Esophagus muscularis mucosa (tissue), 4 donors: ENCODE measurements at regions of chr6 and their contacts with region 1.

Region 1: DNA sequence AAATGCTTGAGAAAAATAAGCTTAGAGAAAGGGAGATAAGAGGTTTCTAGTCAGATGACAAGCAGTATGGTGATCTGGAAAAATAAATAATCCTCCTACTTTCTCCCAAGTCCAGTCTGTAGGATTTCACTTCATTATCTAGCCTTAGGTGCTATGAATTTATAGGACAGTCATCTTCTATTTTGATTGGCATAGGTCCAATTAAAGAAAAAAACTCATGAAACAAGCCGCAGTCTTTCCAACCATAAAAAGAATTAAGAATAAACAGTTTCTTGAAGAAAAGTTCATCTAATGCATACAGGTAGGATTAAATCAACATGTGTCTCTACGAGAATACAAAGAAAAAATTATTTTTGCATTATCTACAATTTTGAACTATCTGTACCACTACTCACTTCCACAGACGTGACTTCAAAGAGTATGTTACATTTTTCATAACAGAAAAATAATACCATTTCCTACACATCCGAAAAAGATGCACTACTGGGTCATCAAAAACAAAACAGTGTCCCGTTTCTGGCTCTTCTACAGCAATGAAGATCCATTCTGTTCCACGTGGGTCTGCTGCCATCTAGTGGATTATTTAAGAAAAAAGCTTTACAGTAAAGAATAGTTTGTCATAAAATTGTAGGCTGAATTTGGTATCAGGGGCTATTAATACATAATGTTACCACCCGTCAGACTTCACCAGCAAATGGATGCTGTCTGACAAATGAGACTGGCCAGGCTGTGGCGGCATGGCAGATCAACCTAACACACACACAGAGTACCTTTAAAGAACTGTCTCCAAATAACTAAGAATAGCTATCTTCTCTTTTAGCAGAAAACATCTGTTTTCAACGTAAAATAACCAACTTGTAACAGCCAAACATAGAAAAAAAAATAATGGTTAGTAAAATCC is 28.9 kb downstream of the STX7 start:
- DNase-seq: no peak
- H3K4me3 ChIP-seq: no peak overlapping the region
- H3K27ac ChIP-seq: no peak overlapping the region
- H3K4me1 ChIP-seq: peaks cover 7 to 55% (median 40%) of the 10 kb centered on the region in 4 donors
- H3K27me3 ChIP-seq: no peaks in the 10 kb centered on the region
- CTCF ChIP-seq: peak; percentile 73 to 80 (median 76)
- EP300 ChIP-seq: no peak
- POLR2A ChIP-seq: no peak

Region 2: DNA sequence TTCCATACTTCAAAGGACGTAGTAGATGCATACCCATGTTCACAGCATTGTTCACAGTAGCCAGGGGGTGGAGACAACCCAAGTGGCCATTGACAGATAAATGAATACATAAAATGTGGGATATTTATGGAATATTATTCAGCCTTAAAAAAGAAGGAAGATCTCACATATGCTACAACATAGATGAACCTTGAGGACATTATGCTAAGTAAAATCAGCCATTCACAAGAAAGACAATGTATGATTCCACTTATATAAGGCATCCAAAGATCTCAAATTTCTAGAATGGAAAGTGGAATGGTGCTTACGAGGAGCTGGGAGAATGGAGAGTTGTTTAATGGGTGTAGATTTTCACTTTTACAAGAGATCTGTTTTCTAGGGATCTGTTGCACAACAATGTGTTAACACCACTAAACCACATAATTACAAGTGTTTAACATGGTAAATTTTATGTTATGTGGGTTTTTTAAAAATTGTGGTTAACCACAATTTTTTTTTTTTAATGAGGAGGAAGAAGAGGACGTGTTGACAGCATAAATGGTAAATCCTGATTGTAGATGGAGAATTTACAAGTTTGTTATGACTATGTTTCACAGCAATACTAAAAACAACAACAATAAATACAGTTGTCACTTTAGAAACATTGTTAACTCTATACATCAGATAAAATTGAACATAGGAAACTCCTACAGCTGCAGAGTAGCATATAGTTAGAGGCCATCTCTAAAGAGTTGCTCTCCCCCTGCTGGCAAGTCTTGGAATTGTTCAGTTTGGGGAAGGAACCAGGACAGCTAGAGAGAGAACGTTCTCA is 574.4 kb before region 1 on chr6:
- intact Hi-C with region 1: loop called (anchors 10 kb)
- DNase-seq: no peak
- H3K4me3 ChIP-seq: no peak overlapping the region
- H3K27ac ChIP-seq: no peak overlapping the region
- H3K4me1 ChIP-seq: no peaks in the 10 kb centered on the region
- H3K27me3 ChIP-seq: peaks cover 0 to 2% (median 0%) of the 10 kb centered on the region in 4 donors
- CTCF ChIP-seq: peak; percentile 82 to 94 (median 87)
- EP300 ChIP-seq: no peak
- POLR2A ChIP-seq: no peak

Region 3: GRCh38 chr6:132279592-132280139 is 204.4 kb before region 1 on chr6:
- intact Hi-C with region 1: loop called (anchors 2 kb)
- DNase-seq: no peak
- H3K4me3 ChIP-seq: peak overlapping the region; percentile 41 to 55 (median 44)
- H3K27ac ChIP-seq: peak overlapping the region in 1 of 4 donors; percentile 34
- H3K4me1 ChIP-seq: no peaks in the 10 kb centered on the region
- H3K27me3 ChIP-seq: peaks cover 0 to 16% (median 0%) of the 10 kb centered on the region in 4 donors
- CTCF ChIP-seq: peak; percentile 81 to 87 (median 86)
- EP300 ChIP-seq: no peak
- POLR2A ChIP-seq: no peak

Region 4: DNA sequence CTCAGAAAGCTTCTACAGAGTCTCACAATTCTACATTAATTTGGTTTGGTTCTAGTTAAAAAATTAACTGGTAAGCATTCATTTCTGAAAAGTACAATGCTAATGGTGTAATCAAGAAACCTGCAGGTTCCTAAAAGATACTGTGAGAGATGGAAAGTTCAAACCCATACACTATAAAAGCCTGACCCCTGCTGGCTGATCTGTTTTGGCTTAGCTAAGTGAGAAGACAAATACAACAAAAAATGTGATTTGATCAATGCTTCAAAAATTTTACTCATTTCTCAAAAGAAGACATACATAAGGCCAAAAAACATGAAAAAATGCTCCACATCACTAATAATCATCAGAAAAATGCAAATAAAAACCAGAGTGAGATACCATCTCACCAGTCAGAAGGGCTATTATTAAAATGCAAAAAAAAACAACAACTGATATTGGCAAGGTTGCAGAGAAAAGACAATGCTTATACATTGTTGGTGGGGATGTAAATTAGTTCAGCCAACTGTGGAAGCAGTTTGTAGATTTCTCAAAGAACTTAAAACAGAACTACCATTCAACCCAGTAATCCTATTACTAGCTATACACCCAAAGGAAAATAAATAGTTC is 185.6 kb before region 1 on chr6:
- intact Hi-C with region 1: loop called (anchors 5 kb)
- DNase-seq: no peak
- H3K4me3 ChIP-seq: no peak overlapping the region
- H3K27ac ChIP-seq: no peak overlapping the region
- H3K4me1 ChIP-seq: no peaks in the 10 kb centered on the region
- H3K27me3 ChIP-seq: no peaks in the 10 kb centered on the region
- CTCF ChIP-seq: peak; percentile 36 to 57 (median 49)
- EP300 ChIP-seq: no peak
- POLR2A ChIP-seq: no peak

Region 5: DNA sequence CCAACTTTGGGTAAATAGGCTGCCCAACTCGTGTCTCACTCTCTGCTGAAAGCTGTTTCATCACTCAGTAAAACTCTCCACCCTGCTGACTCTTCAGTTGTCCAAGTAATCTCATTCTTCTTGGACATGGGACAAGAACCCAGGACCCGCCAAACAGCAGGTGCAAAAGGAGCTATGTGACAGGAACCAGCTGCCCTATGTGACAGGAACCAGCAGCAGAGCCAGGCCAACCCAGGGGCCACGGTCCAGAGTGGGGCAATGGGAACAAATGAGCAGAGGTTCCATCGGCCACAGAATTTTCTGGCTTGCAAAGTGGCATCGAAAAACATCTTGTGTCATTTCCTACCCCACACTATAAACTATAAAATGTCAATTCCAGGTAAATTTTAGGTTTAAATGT is 139.2 kb before region 1 on chr6:
- intact Hi-C with region 1: no loop called
- DNase-seq: no peak
- H3K4me3 ChIP-seq: no peak overlapping the region
- H3K27ac ChIP-seq: no peak overlapping the region
- H3K4me1 ChIP-seq: no peaks in the 10 kb centered on the region
- H3K27me3 ChIP-seq: no peaks in the 10 kb centered on the region
- CTCF ChIP-seq: no peak
- EP300 ChIP-seq: no peak
- POLR2A ChIP-seq: no peak

Region 6: DNA sequence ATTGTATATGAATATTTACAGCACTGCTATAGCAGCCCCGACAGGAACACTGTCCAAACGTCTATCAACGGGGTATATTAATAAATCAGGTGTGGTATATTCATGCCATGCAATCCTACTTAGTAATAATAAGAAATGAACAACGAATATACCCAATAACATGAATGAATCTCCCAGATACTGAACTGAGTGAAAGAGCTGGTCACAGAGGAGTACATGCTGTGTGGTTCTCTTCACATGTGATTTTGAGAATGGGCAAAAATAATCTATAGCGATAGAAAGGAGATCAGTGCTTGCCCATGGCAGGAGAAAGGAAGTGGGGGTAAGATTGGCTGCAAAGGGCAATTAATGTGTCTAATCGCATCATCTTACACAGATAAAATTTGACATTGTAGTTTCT is 82.4 kb after region 1 on chr6:
- intact Hi-C with region 1: no loop called
- DNase-seq: no peak
- H3K4me3 ChIP-seq: no peak overlapping the region
- H3K27ac ChIP-seq: no peak overlapping the region
- H3K4me1 ChIP-seq: no peaks in the 10 kb centered on the region
- H3K27me3 ChIP-seq: peaks cover 0 to 10% (median 0%) of the 10 kb centered on the region in 4 donors
- CTCF ChIP-seq: no peak
- EP300 ChIP-seq: no peak
- POLR2A ChIP-seq: no peak